ENCODE measurements at regions of chr1 and their contacts with region 1.

Region 1: DNA sequence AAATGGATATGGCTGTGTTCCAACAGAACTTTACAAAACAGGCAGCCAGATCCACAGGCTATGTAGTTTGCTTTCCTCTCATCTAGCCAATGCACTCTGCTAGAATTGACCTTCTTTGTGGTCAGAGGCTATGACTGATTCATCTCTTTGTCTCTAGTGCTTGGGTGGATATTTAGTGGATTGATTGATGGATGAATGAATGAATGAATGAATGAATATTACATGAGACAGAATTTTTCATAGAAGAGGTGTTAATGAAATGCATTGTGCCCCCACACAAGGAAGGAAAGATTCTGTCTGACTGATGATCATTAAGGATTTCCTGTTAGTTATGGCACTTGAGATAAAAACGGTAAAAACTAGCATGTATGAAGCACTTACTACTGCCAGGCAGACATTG is 50.5 kb upstream of the ZYG11A start:
- DNase-seq: peak; percentile 50
- H3K4me3 ChIP-seq: no peak overlapping the region
- H3K27ac ChIP-seq: peak overlapping the region; percentile 48
- H3K4me1 ChIP-seq: peaks cover 12% of the 10 kb centered on the region
- H3K27me3 ChIP-seq: no peaks in the 10 kb centered on the region
- CTCF ChIP-seq: no peak

Region 2: DNA sequence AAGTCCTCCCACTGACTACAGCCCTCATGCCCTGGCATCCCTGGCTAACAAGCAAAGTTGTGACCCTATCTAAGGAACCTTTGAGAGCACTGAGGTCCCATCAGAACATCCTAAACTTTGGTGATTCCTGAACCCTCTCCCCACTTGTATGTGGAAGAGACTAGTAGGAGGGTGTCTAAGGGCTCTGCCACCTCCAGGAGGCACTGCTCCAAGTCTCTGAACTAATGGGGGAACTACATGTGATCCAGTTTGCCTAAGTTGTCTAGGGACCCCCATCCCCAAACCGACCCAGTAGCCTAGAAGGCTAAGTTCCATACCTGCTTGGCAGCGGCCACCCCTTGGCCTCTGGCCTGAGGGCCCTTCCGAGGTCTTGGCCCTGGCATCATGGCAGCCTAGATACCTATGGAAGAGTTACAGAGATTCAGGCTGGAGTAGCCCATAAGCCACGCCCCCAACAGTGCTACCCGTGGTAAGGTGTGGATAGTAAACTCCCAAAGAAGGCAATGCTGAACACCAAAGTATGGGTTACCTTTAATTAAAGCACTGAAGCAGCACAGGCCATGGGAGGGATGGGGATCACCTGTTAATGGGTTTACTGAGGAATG is 427.7 kb before region 1 on chr1:
- CTCF ChIA-PET with region 1: no interaction called
- POLR2A ChIA-PET with region 1: no interaction called
- intact Hi-C with region 1: no loop called
- DNase-seq: peak; percentile 14
- H3K4me3 ChIP-seq: peak overlapping the region; percentile 92
- H3K27ac ChIP-seq: peak overlapping the region; percentile 91
- H3K4me1 ChIP-seq: peaks cover 12% of the 10 kb centered on the region
- H3K27me3 ChIP-seq: no peaks in the 10 kb centered on the region
- CTCF ChIP-seq: peak; percentile 35

Region 3: GRCh38 chr1:52825868-52826267 is 33.8 kb after region 1 on chr1:
- CTCF ChIA-PET with region 1: no interaction called
- POLR2A ChIA-PET with region 1: no interaction called
- intact Hi-C with region 1: loop called (anchors 1 kb)
- DNase-seq: peak; percentile 33
- H3K4me3 ChIP-seq: no peak overlapping the region
- H3K27ac ChIP-seq: no peak overlapping the region
- H3K4me1 ChIP-seq: no peaks in the 10 kb centered on the region
- H3K27me3 ChIP-seq: no peaks in the 10 kb centered on the region
- CTCF ChIP-seq: peak; percentile 55

Measured in A673 (cell line).